Esophagus muscularis mucosa (tissue), 4 donors: ENCODE measurements at regions of chr2 and their contacts with region 1.

Region 1: GRCh38 chr2:11583840-11584524 is 50.1 kb downstream of the GREB1 start:
- DNase-seq: peak; percentile 94
- H3K4me3 ChIP-seq: no peak overlapping the region
- H3K27ac ChIP-seq: peak overlapping the region; percentile 30 to 62 (median 54)
- H3K4me1 ChIP-seq: peaks cover 13 to 36% (median 28%) of the 10 kb centered on the region in 4 donors
- H3K27me3 ChIP-seq: peaks cover 0 to 4% (median 0%) of the 10 kb centered on the region in 4 donors
- CTCF ChIP-seq: peak; percentile 77 to 88 (median 88)
- EP300 ChIP-seq: no peak
- POLR2A ChIP-seq: no peak

Region 2: GRCh38 chr2:11299439-11299838 is 284.5 kb before region 1 on chr2:
- intact Hi-C with region 1: no loop called
- DNase-seq: no peak
- H3K4me3 ChIP-seq: no peak overlapping the region
- H3K27ac ChIP-seq: no peak overlapping the region
- H3K4me1 ChIP-seq: peaks cover 11 to 38% (median 33%) of the 10 kb centered on the region in 4 donors
- H3K27me3 ChIP-seq: no peaks in the 10 kb centered on the region
- CTCF ChIP-seq: no peak
- EP300 ChIP-seq: no peak
- POLR2A ChIP-seq: no peak

Region 3: GRCh38 chr2:11477994-11478393 is 106.0 kb before region 1 on chr2:
- intact Hi-C with region 1: loop called (anchors 1 kb)
- DNase-seq: peak; percentile 98
- H3K4me3 ChIP-seq: no peak overlapping the region
- H3K27ac ChIP-seq: no peak overlapping the region
- H3K4me1 ChIP-seq: peaks cover 0 to 14% (median 11%) of the 10 kb centered on the region in 4 donors
- H3K27me3 ChIP-seq: peaks cover 0 to 16% (median 12%) of the 10 kb centered on the region in 4 donors
- CTCF ChIP-seq: peak; percentile 82 to 92 (median 85)
- EP300 ChIP-seq: no peak
- POLR2A ChIP-seq: no peak